AG04449 (cell line): ENCODE measurements at regions of chr9 and their contacts with region 1.

Region 1: GRCh38 chr9:130243015-130243734 is 22.4 kb upstream of the HMCN2 start:
- DNase-seq: no peak
- H3K4me3 ChIP-seq: no peak overlapping the region; the same call in 1 of the 2 replicates
- CTCF ChIP-seq: peak; percentile 87

Region 2: GRCh38 chr9:130128733-130129431 is 114.3 kb before region 1 on chr9:
- CTCF ChIA-PET with region 1: interaction called, 10 read pairs
- POLR2A ChIA-PET with region 1: no interaction called
- DNase-seq: peak; percentile 85
- H3K4me3 ChIP-seq: no peak overlapping the region
- CTCF ChIP-seq: no peak

Region 3: GRCh38 chr9:130199605-130200004 is 43.6 kb before region 1 on chr9:
- CTCF ChIA-PET with region 1: interaction called, 12 read pairs
- POLR2A ChIA-PET with region 1: no interaction called
- DNase-seq: no peak
- H3K4me3 ChIP-seq: no peak overlapping the region
- CTCF ChIP-seq: no peak

Region 4: DNA sequence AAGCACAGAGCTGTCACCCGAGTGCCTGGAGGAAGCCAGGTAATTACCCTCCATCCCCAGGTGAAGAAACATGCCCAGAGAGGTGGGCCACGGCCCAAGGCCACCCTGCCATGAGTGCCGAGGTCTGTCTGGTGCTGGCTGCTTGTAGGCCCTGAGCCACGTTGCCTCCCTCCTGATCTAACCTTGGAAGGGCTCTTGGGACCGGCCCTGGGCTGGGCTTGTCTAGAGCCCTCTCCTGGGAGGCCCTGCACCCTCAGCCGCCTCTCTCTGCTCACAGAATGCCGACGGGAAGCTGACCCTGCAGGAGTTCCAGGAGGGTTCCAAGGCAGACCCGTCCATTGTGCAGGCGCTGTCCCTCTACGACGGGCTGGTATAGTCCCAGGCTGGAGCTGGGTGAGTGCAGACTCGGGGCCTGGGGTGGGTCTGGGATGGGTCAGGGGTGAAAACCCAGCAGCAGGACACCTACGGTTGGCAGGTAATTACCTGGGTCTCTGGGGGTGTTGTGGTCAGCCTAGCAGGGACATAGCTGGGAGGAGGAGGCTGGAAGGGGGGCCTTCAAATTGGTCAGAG is 17.0 kb before region 1 on chr9:
- CTCF ChIA-PET with region 1: interaction called, 28 read pairs
- POLR2A ChIA-PET with region 1: no interaction called
- DNase-seq: no peak
- H3K4me3 ChIP-seq: no peak overlapping the region
- CTCF ChIP-seq: no peak

Region 5: GRCh38 chr9:130271473-130271872 is 28.3 kb after region 1 on chr9:
- CTCF ChIA-PET with region 1: interaction called, 27 read pairs
- POLR2A ChIA-PET with region 1: no interaction called
- DNase-seq: no peak
- H3K4me3 ChIP-seq: no peak overlapping the region
- CTCF ChIP-seq: no peak